ENCODE measurements at regions of chr4 and their contacts with region 1.

Region 1: DNA sequence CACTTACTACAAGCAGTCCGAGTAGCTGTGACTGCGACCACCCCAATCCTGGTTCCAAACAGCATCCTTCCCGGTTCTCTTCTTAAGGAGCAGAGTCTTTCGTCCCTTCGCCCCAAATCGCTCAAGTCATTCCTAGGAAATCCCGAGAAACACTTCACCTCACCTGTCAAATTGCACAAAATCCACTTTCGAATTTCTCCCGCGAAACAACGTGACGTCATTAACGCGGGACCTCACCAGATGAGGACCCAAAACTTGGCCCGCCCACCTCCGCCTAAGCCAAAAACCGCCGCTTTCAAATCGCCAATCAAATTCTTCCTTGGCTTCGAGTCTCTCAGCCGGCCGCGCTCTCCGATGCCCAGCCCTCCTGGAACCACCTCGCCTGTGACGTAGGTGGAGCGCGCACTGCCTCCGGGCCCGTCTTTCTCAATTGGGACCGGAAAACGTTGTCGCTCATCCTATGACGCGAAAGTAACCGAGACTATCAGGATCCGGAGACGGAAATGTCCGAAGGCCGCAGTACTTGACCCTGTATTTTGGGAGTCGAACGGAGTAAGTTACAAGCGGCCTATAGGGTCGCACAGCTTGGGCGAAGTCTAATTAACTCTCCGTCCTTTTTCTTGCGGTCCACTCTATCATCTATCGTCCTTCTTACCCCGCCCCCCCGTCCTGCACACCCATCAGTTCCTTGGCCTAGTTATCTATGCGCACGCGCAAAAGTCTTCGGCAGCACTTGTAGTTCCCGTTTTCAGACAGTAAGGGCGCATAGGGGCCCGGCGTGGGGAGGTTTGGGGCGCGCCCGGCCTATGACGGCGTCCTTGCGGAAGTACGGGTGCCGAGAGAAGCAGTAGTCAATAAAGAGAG is at the starts of genes LARP7 and ZGRF1:
- DNase-seq: peak; percentile 99
- H3K4me3 ChIP-seq: peak within 1 kb of the TSS; percentile 53 to 72 (median 62)
- H3K27ac ChIP-seq: peak within 1 kb of the TSS; percentile 88 to 95 (median 90)
- H3K4me1 ChIP-seq: peaks cover 30 to 41% (median 31%) of the 10 kb centered on the region in 4 donors
- H3K27me3 ChIP-seq: no peaks in the 10 kb centered on the region
- CTCF ChIP-seq: peak; percentile 95 to 99 (median 96)
- EP300 ChIP-seq: no peak
- POLR2A ChIP-seq: no peak
- total RNA-seq, gene LARP7: 42.3 to 75.6 (median 47.3) TPM
- total RNA-seq, gene ZGRF1: 1.5 to 10.0 (median 3.7) TPM

Region 2: DNA sequence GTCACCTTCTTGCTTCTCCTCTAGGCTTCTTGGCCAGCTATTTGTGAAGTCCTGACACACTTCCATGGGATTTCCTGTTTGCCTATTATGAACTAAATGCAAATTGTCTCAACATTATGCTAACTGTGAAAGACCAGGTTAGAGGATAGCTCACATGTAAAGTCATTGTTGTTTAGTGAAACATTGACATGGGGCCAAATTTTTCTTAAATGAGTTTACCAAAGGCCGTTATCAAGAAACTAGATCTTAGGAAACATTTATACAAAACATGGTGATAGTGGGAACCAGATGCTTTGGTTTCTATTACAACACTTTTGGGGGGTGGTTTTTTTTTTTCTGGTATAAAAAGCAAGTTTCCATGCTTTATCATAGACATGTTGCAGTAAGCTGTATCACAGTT is 958.4 kb before region 1 on chr4:
- intact Hi-C with region 1: no loop called
- DNase-seq: no peak
- H3K4me3 ChIP-seq: no peak overlapping the region
- H3K27ac ChIP-seq: no peak overlapping the region
- H3K4me1 ChIP-seq: peaks cover 0 to 4% (median 0%) of the 10 kb centered on the region in 4 donors
- H3K27me3 ChIP-seq: no peaks in the 10 kb centered on the region
- CTCF ChIP-seq: no peak
- EP300 ChIP-seq: no peak
- POLR2A ChIP-seq: no peak

Region 3: GRCh38 chr4:112485888-112486287 is 151.0 kb before region 1 on chr4:
- intact Hi-C with region 1: no loop called
- DNase-seq: no peak
- H3K4me3 ChIP-seq: no peak overlapping the region
- H3K27ac ChIP-seq: no peak overlapping the region
- H3K4me1 ChIP-seq: no peaks in the 10 kb centered on the region
- H3K27me3 ChIP-seq: no peaks in the 10 kb centered on the region
- CTCF ChIP-seq: no peak
- EP300 ChIP-seq: no peak
- POLR2A ChIP-seq: no peak

Region 4: DNA sequence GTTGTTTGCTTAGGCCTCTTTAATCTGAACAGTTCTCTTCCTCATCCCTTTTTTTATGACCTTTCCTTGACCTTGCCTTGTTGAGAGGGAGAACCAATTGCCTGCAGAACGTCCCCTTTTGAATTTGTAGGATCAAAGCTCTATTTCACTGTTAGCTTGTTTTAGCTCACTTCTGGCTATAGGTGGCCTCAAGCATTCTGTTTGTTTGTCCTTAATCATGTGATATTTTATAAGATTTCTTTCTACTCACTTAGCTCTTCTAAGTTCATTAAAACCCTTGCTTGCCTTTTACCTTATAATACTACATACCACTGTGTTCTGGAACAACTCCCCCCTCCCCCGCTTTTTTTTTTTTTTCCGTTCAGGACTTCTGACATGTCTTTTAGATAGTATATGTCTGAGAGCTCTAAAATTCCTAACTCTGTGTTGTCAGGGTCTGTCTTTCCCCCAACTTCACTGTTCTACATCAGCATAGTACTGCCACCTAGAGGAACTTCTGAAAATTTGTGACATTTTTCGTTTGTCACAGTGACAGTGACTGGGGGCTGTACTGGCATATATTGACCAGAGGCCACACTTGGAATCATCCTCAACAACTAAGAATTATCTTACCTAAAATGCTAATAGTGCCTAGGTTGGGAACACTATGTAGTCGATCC is 128.5 kb after region 1 on chr4:
- intact Hi-C with region 1: loop called (anchors 5 kb)
- DNase-seq: no peak
- H3K4me3 ChIP-seq: no peak overlapping the region
- H3K27ac ChIP-seq: no peak overlapping the region
- H3K4me1 ChIP-seq: peaks cover 0 to 9% (median 0%) of the 10 kb centered on the region in 4 donors
- H3K27me3 ChIP-seq: no peaks in the 10 kb centered on the region
- CTCF ChIP-seq: peak; percentile 27 to 49 (median 37)
- EP300 ChIP-seq: no peak
- POLR2A ChIP-seq: no peak

Measured in esophagus muscularis mucosa (tissue), 4 donors.